Spleen (tissue), 13 donors: ENCODE measurements at regions of chr1 and their contacts with region 1.

Region 1: DNA sequence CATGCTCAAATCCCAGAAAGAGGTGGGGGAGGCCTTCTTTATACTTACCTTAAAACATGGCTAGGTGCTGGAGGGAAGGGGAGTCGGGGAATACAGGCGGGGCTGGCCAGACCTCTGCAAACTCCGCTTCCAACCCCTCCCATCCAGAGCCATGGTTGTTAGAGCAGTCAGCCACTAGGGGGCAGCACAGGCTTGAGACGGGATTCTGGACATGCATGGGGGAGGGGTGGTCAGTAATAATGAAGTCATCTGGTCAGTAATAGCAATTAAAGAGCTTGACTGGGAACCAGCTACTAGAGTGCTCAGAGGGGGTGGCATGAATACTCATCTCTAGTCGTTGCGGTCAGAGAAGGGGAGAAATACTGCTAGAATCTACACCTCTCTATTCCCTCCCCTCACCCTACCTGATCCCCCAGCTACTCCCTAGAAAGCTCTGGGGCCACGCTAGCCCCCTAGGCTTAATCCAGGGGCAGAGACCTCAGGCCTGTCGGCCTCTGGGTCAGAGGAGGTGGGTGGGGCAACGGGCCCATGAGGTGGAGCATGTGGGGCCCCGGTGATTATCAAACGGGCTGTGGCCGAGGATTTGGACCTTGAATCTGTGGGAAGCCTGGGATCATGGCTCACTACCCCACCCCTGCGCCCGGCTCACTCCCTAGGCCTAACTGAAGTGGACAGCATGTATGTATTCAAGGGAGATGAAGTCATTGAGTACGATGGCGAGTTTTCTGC is 2.9 kb downstream of the CASQ1 start:
- DNase-seq: peak; percentile 93
- H3K4me3 ChIP-seq: no peak overlapping the region
- H3K27ac ChIP-seq: peak overlapping the region in 2 of 8 donors; percentile 14 to 28
- H3K4me1 ChIP-seq: peaks cover 0 to 21% (median 12%) of the 10 kb centered on the region in 6 donors
- H3K27me3 ChIP-seq: no peaks in the 10 kb centered on the region
- CTCF ChIP-seq: peak; percentile 87 to 96 (median 95)
- POLR2A ChIP-seq: no peak

Region 2: GRCh38 chr1:160291248-160292220 is 98.3 kb after region 1 on chr1:
- intact Hi-C with region 1: loop called (anchors 5 kb)
- DNase-seq: peak; percentile 80
- H3K4me3 ChIP-seq: no peak overlapping the region
- H3K27ac ChIP-seq: peak overlapping the region in 2 of 8 donors; percentile 0 to 31
- H3K4me1 ChIP-seq: peaks cover 0 to 7% (median 0%) of the 10 kb centered on the region in 6 donors
- H3K27me3 ChIP-seq: no peaks in the 10 kb centered on the region
- CTCF ChIP-seq: peak; percentile 70 to 90 (median 81)
- POLR2A ChIP-seq: no peak

Region 3: GRCh38 chr1:160376525-160377131 is 183.4 kb after region 1 on chr1:
- intact Hi-C with region 1: loop called (anchors 5 kb)
- DNase-seq: no peak
- H3K4me3 ChIP-seq: peak overlapping the region in 1 of 8 donors; percentile 35
- H3K27ac ChIP-seq: peak overlapping the region in 1 of 8 donors; percentile 62
- H3K4me1 ChIP-seq: peaks cover 8 to 21% (median 17%) of the 10 kb centered on the region in 6 donors
- H3K27me3 ChIP-seq: no peaks in the 10 kb centered on the region
- CTCF ChIP-seq: peak; percentile 57 to 89 (median 77)
- POLR2A ChIP-seq: no peak